ENCODE measurements at regions of chr4 and their contacts with region 1.

Region 1: GRCh38 chr4:84338380-84338779 is 160.7 kb downstream of the NKX6-1 start:
- DNase-seq: no peak
- ATAC-seq: no peak
- H3K4me3 ChIP-seq: no peak overlapping the region
- H3K27ac ChIP-seq: no peak overlapping the region
- H3K4me1 ChIP-seq: no peaks in the 10 kb centered on the region
- H3K27me3 ChIP-seq: no peaks in the 10 kb centered on the region
- CTCF ChIP-seq: no peak
- POLR2A ChIP-seq: no peak
- RAD21 ChIP-seq: no peak

Region 2: GRCh38 chr4:82989575-82990429 is 1348.6 kb before region 1 on chr4:
- CTCF ChIA-PET with region 1: no interaction called
- POLR2A ChIA-PET with region 1: no interaction called
- dilution Hi-C with region 1: no loop called
- in situ Hi-C with region 1: no loop called
- intact Hi-C with region 1: no loop called
- DNase-seq: peak; percentile 31
- ATAC-seq: peak; percentile 33
- H3K4me3 ChIP-seq: peak overlapping the region; percentile 2; the same call in 1 of the 2 replicates
- H3K27ac ChIP-seq: peak overlapping the region; percentile 62; the same call in 1 of the 2 replicates
- H3K4me1 ChIP-seq: peaks cover 11% of the 10 kb centered on the region
- H3K27me3 ChIP-seq: no peaks in the 10 kb centered on the region
- CTCF ChIP-seq: no peak
- POLR2A ChIP-seq: no peak
- RAD21 ChIP-seq: no peak

Region 3: GRCh38 chr4:84394386-84394785 is 56.0 kb after region 1 on chr4:
- CTCF ChIA-PET with region 1: no interaction called
- POLR2A ChIA-PET with region 1: no interaction called
- dilution Hi-C with region 1: no loop called
- in situ Hi-C with region 1: no loop called
- intact Hi-C with region 1: loop called (anchors 2 kb)
- DNase-seq: no peak
- ATAC-seq: no peak
- H3K4me3 ChIP-seq: no peak overlapping the region
- H3K27ac ChIP-seq: no peak overlapping the region
- H3K4me1 ChIP-seq: no peaks in the 10 kb centered on the region
- H3K27me3 ChIP-seq: no peaks in the 10 kb centered on the region
- CTCF ChIP-seq: no peak
- POLR2A ChIP-seq: no peak
- RAD21 ChIP-seq: no peak

Region 4: GRCh38 chr4:84455697-84456096 is 117.3 kb after region 1 on chr4:
- CTCF ChIA-PET with region 1: no interaction called
- POLR2A ChIA-PET with region 1: no interaction called
- dilution Hi-C with region 1: no loop called
- in situ Hi-C with region 1: no loop called
- intact Hi-C with region 1: no loop called
- DNase-seq: no peak
- ATAC-seq: no peak
- H3K4me3 ChIP-seq: no peak overlapping the region
- H3K27ac ChIP-seq: no peak overlapping the region
- H3K4me1 ChIP-seq: no peaks in the 10 kb centered on the region
- H3K27me3 ChIP-seq: no peaks in the 10 kb centered on the region
- CTCF ChIP-seq: no peak
- POLR2A ChIP-seq: no peak
- RAD21 ChIP-seq: no peak